ENCODE measurements at regions of chr12 and their contacts with region 1.

Region 1: DNA sequence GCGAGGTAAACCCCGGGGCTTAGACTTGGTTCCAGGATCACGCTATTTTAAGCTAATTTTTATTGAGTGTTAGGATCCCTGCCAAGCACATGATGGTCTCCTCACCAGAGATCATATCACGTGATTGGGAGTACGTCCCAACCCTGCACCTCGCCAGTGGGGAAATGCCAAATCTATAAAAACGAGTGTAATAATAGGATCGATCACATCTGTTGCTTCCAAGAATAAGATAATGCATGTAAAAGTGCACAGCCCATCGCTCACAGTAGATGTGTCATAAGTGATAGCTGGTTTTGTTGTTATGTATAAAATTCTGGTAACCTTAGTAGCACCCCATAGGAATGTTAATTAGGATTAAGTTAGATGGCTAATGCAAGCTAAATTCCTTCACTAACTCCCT is 581.0 kb upstream of the TMEM132C start:
- DNase-seq: no peak
- ATAC-seq: no peak
- H3K4me3 ChIP-seq: no peak overlapping the region
- H3K4me3 Mint-ChIP-seq: no peak overlapping the region
- H3K27ac ChIP-seq: no peak overlapping the region
- H3K27ac Mint-ChIP-seq: no peak overlapping the region
- H3K4me1 ChIP-seq: no peaks in the 10 kb centered on the region
- H3K4me1 Mint-ChIP-seq: no peaks in the 10 kb centered on the region
- H3K27me3 ChIP-seq: no peaks in the 10 kb centered on the region
- H3K27me3 Mint-ChIP-seq: no peaks in the 10 kb centered on the region

Region 2: GRCh38 chr12:127667131-127667685 is 18.7 kb before region 1 on chr12:
- CTCF ChIA-PET with region 1: no interaction called
- POLR2A ChIA-PET with region 1: no interaction called
- DNase-seq: no peak
- ATAC-seq: no peak
- H3K4me3 ChIP-seq: no peak overlapping the region
- H3K4me3 Mint-ChIP-seq: no peak overlapping the region
- H3K27ac ChIP-seq: no peak overlapping the region
- H3K27ac Mint-ChIP-seq: no peak overlapping the region
- H3K4me1 ChIP-seq: no peaks in the 10 kb centered on the region
- H3K4me1 Mint-ChIP-seq: no peaks in the 10 kb centered on the region
- H3K27me3 ChIP-seq: no peaks in the 10 kb centered on the region
- H3K27me3 Mint-ChIP-seq: no peaks in the 10 kb centered on the region

Region 3: GRCh38 chr12:128969480-128970055 is 1283.6 kb after region 1 on chr12:
- CTCF ChIA-PET with region 1: interaction called in 1 of 2 experiments, 13 read pairs
- POLR2A ChIA-PET with region 1: no interaction called
- DNase-seq: peak in 3 of 35 experiments; percentile 7 to 21 (median 14)
- ATAC-seq: peak in 3 of 4 experiments; percentile 43 to 59 (median 52)
- H3K4me3 ChIP-seq: no peak overlapping the region
- H3K4me3 Mint-ChIP-seq: peak overlapping the region in 1 of 3 donors; percentile 24
- H3K27ac ChIP-seq: no peak overlapping the region
- H3K27ac Mint-ChIP-seq: no peak overlapping the region
- H3K4me1 ChIP-seq: no peaks in the 10 kb centered on the region
- H3K4me1 Mint-ChIP-seq: peaks cover 0 to 4% (median 3%) of the 10 kb centered on the region in 3 donors
- H3K27me3 ChIP-seq: peaks cover 4 to 35% of the 10 kb centered on the region in 2 experiments
- H3K27me3 Mint-ChIP-seq: peaks cover 6 to 28% of the 10 kb centered on the region in 2 donors

Measured in T-cell (primary cell).